Naive thymus-derived CD4-positive, alpha-beta T cell (primary cell): ENCODE measurements at regions of chrX and their contacts with region 1.

Region 1: GRCh38 chrX:106481341-106481740 is 130.4 kb upstream of the RADX start:
- DNase-seq: peak in 6 of 9 donors; percentile 10 to 52 (median 24)
- ATAC-seq: no peak
- H3K4me3 ChIP-seq: no peak overlapping the region
- H3K4me3 Mint-ChIP-seq: no peak overlapping the region
- H3K27ac ChIP-seq: no peak overlapping the region
- H3K27ac Mint-ChIP-seq: no peak overlapping the region
- H3K4me1 ChIP-seq: peaks cover 0 to 4% of the 10 kb centered on the region in 2 donors
- H3K4me1 Mint-ChIP-seq: peaks cover 2 to 26% (median 14%) of the 10 kb centered on the region in 7 donors
- H3K27me3 ChIP-seq: no peaks in the 10 kb centered on the region
- H3K27me3 Mint-ChIP-seq: no peaks in the 10 kb centered on the region

Region 2: DNA sequence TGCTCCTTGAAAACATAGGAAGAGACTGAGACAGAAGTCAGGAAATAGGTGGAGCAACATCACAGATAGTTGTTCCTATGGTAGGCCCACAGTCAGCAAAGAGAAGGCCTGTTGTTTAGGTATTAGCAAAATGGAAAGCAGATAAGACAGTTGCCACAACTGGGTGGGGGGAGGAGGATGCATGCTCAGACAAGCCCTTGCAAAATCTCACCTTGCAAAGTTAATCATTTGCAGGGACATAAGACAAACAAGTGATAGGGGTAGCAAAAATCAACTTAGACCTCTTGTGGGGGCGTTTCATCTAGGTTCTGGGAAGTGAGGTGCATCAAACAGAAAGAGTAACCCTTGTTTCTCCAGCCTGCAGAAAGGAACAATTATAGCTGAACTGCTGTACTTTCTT is 473.5 kb before region 1 on chrX:
- CTCF ChIA-PET with region 1: no interaction called
- POLR2A ChIA-PET with region 1: no interaction called
- intact Hi-C with region 1: no loop called
- DNase-seq: no peak
- ATAC-seq: no peak
- H3K4me3 ChIP-seq: no peak overlapping the region
- H3K4me3 Mint-ChIP-seq: no peak overlapping the region
- H3K27ac ChIP-seq: no peak overlapping the region
- H3K27ac Mint-ChIP-seq: no peak overlapping the region
- H3K4me1 ChIP-seq: no peaks in the 10 kb centered on the region
- H3K4me1 Mint-ChIP-seq: no peaks in the 10 kb centered on the region
- H3K27me3 ChIP-seq: no peaks in the 10 kb centered on the region
- H3K27me3 Mint-ChIP-seq: no peaks in the 10 kb centered on the region

Region 3: DNA sequence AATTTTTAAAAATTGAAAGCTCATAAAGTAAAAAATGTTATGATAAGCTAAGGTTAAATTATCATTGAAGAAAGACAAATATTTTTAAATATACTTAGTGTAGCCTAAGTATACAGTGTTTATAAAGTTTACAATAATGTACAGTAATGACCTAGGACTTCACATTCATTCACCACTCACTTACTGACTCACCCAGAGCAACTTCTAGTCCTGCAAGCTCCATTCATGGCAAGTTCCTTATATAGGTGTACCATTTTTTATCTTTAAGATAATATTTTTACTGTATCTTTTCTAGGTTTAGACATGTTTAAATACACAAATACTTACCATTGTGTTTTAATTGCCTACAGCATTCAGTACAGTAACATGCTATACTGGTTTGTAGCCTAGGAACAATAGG is 18.1 kb after region 1 on chrX:
- CTCF ChIA-PET with region 1: no interaction called
- POLR2A ChIA-PET with region 1: no interaction called
- intact Hi-C with region 1: loop called in 1 of 2 experiments (anchors 2 kb)
- DNase-seq: no peak
- ATAC-seq: no peak
- H3K4me3 ChIP-seq: no peak overlapping the region
- H3K4me3 Mint-ChIP-seq: no peak overlapping the region
- H3K27ac ChIP-seq: no peak overlapping the region
- H3K27ac Mint-ChIP-seq: no peak overlapping the region
- H3K4me1 ChIP-seq: peaks cover 0 to 5% of the 10 kb centered on the region in 2 donors
- H3K4me1 Mint-ChIP-seq: peaks cover 2 to 20% (median 14%) of the 10 kb centered on the region in 7 donors
- H3K27me3 ChIP-seq: no peaks in the 10 kb centered on the region
- H3K27me3 Mint-ChIP-seq: no peaks in the 10 kb centered on the region

Region 4: DNA sequence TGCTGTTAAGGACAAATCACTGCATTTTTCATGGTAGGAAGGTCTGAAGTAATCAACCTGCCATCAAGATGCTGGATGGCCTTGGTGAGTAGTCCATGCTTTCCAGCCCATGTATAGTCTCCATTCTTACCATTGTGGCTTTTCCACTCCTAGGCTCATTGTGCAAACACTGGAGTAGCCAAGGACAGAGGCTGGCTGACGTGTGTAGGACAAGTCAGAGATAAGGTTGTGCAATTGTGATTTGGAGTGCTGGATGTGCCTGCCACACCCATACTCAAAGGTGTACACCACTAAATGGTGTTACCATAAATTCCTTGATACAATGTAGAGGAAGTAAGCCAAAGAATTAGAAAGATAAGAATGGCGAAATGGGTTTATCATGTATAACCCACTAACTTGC is 104.1 kb after region 1 on chrX:
- CTCF ChIA-PET with region 1: no interaction called
- POLR2A ChIA-PET with region 1: no interaction called
- intact Hi-C with region 1: no loop called
- DNase-seq: no peak
- ATAC-seq: no peak
- H3K4me3 ChIP-seq: no peak overlapping the region
- H3K4me3 Mint-ChIP-seq: no peak overlapping the region
- H3K27ac ChIP-seq: no peak overlapping the region
- H3K27ac Mint-ChIP-seq: no peak overlapping the region
- H3K4me1 ChIP-seq: no peaks in the 10 kb centered on the region
- H3K4me1 Mint-ChIP-seq: no peaks in the 10 kb centered on the region
- H3K27me3 ChIP-seq: no peaks in the 10 kb centered on the region
- H3K27me3 Mint-ChIP-seq: no peaks in the 10 kb centered on the region

Region 5: GRCh38 chrX:106619797-106620196 is 138.5 kb after region 1 on chrX:
- CTCF ChIA-PET with region 1: interaction called, 8 read pairs
- POLR2A ChIA-PET with region 1: interaction called, 3 read pairs
- intact Hi-C with region 1: loop called (anchors 1 kb)
- DNase-seq: no peak
- ATAC-seq: no peak
- H3K4me3 ChIP-seq: no peak overlapping the region
- H3K4me3 Mint-ChIP-seq: no peak overlapping the region
- H3K27ac ChIP-seq: no peak overlapping the region
- H3K27ac Mint-ChIP-seq: no peak overlapping the region
- H3K4me1 ChIP-seq: no peaks in the 10 kb centered on the region
- H3K4me1 Mint-ChIP-seq: peaks cover 0 to 9% (median 5%) of the 10 kb centered on the region in 7 donors
- H3K27me3 ChIP-seq: no peaks in the 10 kb centered on the region
- H3K27me3 Mint-ChIP-seq: no peaks in the 10 kb centered on the region

Region 6: DNA sequence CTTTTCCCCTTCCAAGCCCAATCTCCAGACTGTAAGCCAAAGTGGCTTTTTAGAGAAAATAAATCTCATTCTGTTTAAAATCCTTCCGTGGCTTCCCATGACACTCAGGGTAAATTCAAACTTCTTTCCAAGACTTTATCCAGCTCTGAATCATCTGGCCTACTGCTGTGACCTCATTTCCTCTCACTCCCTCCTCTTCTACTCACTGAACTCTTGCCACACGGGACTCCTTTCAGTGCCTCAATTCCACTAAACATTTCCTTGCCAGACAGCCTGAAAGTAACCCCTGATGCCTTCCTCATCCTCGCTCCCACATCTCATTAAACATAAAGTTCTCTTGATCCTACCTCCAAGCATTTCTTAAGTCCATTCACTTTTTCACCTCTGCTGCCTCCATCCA is 217.4 kb after region 1 on chrX:
- CTCF ChIA-PET with region 1: no interaction called
- POLR2A ChIA-PET with region 1: no interaction called
- intact Hi-C with region 1: no loop called
- DNase-seq: no peak
- ATAC-seq: no peak
- H3K4me3 ChIP-seq: no peak overlapping the region
- H3K4me3 Mint-ChIP-seq: no peak overlapping the region
- H3K27ac ChIP-seq: no peak overlapping the region
- H3K27ac Mint-ChIP-seq: no peak overlapping the region
- H3K4me1 ChIP-seq: no peaks in the 10 kb centered on the region
- H3K4me1 Mint-ChIP-seq: no peaks in the 10 kb centered on the region
- H3K27me3 ChIP-seq: no peaks in the 10 kb centered on the region
- H3K27me3 Mint-ChIP-seq: peaks cover 0 to 12% (median under 1%) of the 10 kb centered on the region in 5 donors

Region 7: DNA sequence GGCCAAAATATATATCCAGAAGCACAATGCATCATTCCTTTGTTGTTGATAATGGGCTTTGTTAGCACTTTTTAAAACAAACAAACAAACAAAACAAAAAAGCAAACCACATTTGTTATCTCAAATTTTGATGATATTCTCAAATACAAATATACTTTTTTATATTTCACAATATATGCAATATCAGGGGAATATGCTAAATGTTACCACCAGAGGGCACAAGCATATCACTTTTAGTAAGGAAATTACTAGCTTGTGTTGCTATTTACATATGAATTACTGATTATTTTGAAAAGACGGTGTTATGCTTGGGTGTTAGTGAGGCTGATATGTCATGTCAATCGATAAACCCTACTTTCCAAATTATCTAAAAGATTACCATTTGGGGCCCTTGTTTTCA is 392.7 kb after region 1 on chrX:
- CTCF ChIA-PET with region 1: no interaction called
- POLR2A ChIA-PET with region 1: no interaction called
- intact Hi-C with region 1: loop called (anchors 5 to 10 kb)
- DNase-seq: peak in 4 of 9 donors; percentile 14 to 22 (median 21)
- ATAC-seq: no peak
- H3K4me3 ChIP-seq: no peak overlapping the region
- H3K4me3 Mint-ChIP-seq: no peak overlapping the region
- H3K27ac ChIP-seq: no peak overlapping the region
- H3K27ac Mint-ChIP-seq: no peak overlapping the region
- H3K4me1 ChIP-seq: no peaks in the 10 kb centered on the region
- H3K4me1 Mint-ChIP-seq: no peaks in the 10 kb centered on the region
- H3K27me3 ChIP-seq: no peaks in the 10 kb centered on the region
- H3K27me3 Mint-ChIP-seq: peaks cover 0 to 9% (median 3%) of the 10 kb centered on the region in 5 donors